ENCODE measurements at regions of chr5 and their contacts with region 1.

Region 1: GRCh38 chr5:152532714-152533113 is 127.6 kb upstream of the NMUR2 start:
- DNase-seq: no peak
- H3K4me3 ChIP-seq: no peak overlapping the region
- H3K27ac ChIP-seq: no peak overlapping the region
- H3K4me1 ChIP-seq: peaks cover 0 to 9% (median 4%) of the 10 kb centered on the region in 4 donors
- H3K27me3 ChIP-seq: no peaks in the 10 kb centered on the region
- CTCF ChIP-seq: peak in 2 of 3 experiments; percentile 44 to 50
- EP300 ChIP-seq: no peak
- POLR2A ChIP-seq: no peak

Region 2: GRCh38 chr5:152477536-152477935 is 55.2 kb before region 1 on chr5:
- intact Hi-C with region 1: no loop called
- DNase-seq: no peak
- H3K4me3 ChIP-seq: no peak overlapping the region
- H3K27ac ChIP-seq: no peak overlapping the region
- H3K4me1 ChIP-seq: no peaks in the 10 kb centered on the region
- H3K27me3 ChIP-seq: no peaks in the 10 kb centered on the region
- CTCF ChIP-seq: no peak
- EP300 ChIP-seq: no peak
- POLR2A ChIP-seq: no peak

Region 3: GRCh38 chr5:153147891-153148623 is 615.3 kb after region 1 on chr5:
- intact Hi-C with region 1: loop called (anchors 10 kb)
- DNase-seq: no peak
- H3K4me3 ChIP-seq: no peak overlapping the region
- H3K27ac ChIP-seq: no peak overlapping the region
- H3K4me1 ChIP-seq: no peaks in the 10 kb centered on the region
- H3K27me3 ChIP-seq: no peaks in the 10 kb centered on the region
- CTCF ChIP-seq: peak in 1 of 3 experiments; percentile 48
- EP300 ChIP-seq: no peak
- POLR2A ChIP-seq: no peak

Region 4: DNA sequence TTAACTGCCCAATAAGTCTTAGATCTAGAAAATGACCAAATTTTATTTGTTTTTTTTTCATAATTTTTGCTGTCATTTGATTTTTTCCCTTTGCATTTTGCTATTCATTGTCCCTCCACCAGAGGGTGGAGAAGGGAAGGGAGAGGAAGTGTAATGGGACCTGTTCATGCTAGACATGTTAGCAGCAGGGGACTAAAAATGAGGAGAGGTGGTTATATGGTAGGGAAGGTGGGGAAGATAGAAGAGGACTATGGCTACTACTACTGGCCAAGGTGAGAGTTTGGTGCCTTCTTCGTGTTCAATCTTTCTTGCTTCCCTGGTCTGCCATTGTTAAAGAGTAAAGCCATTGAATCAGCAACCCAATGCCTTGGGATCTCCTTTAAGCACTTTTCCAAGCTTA is 964.1 kb after region 1 on chr5:
- intact Hi-C with region 1: loop called (anchors 10 kb)
- DNase-seq: peak; percentile 62
- H3K4me3 ChIP-seq: no peak overlapping the region
- H3K27ac ChIP-seq: no peak overlapping the region
- H3K4me1 ChIP-seq: no peaks in the 10 kb centered on the region
- H3K27me3 ChIP-seq: peaks cover 0 to 5% (median 0%) of the 10 kb centered on the region in 4 donors
- CTCF ChIP-seq: peak; percentile 43 to 69 (median 62)
- EP300 ChIP-seq: no peak
- POLR2A ChIP-seq: no peak

Region 5: DNA sequence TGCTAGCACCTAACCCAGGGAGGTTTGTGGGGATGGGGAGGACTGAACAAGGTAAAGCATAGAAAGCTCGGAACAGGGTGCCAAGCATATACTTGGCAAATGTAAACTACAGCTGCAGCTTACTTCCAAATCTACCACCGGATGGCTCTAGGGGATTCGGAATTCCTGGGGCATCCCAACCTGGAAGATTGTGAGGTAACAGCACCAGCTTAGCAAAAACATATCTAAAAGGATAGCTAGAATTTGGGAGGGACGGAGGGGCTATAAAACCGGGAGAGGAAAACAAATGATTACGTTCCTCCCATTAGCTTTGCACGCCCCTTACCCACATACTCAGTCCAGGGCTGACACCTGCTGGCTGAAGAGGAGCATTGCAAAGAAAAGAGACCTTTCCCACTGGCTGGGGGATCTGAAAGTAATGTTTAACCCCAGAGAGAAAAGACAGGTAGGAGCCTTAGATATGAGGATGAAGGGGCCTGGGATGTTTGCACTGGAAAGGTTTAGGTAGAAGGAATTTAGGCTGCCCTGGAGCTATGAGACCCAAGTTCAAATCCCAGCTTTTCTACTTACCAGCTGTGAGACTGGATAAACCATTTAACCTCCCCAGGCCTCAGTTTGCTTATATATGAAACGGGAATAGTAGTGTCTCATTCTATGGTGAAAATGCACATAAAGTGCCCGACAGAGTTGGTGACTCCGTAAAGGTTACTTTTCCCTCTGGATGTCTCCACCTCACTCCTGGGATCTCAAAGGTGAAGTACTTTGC is 1432.3 kb after region 1 on chr5:
- intact Hi-C with region 1: loop called (anchors 1 kb)
- DNase-seq: no peak
- H3K4me3 ChIP-seq: peak overlapping the region in 1 of 4 donors; percentile 28
- H3K27ac ChIP-seq: no peak overlapping the region
- H3K4me1 ChIP-seq: peaks cover 0 to 9% (median 8%) of the 10 kb centered on the region in 4 donors
- H3K27me3 ChIP-seq: peaks cover 0 to 8% (median 0%) of the 10 kb centered on the region in 4 donors
- CTCF ChIP-seq: peak; percentile 75 to 90 (median 85)
- EP300 ChIP-seq: no peak
- POLR2A ChIP-seq: no peak

Measured in esophagus muscularis mucosa (tissue), 4 donors.